ENCODE measurements at regions of chr14 and their contacts with region 1.

Region 1: DNA sequence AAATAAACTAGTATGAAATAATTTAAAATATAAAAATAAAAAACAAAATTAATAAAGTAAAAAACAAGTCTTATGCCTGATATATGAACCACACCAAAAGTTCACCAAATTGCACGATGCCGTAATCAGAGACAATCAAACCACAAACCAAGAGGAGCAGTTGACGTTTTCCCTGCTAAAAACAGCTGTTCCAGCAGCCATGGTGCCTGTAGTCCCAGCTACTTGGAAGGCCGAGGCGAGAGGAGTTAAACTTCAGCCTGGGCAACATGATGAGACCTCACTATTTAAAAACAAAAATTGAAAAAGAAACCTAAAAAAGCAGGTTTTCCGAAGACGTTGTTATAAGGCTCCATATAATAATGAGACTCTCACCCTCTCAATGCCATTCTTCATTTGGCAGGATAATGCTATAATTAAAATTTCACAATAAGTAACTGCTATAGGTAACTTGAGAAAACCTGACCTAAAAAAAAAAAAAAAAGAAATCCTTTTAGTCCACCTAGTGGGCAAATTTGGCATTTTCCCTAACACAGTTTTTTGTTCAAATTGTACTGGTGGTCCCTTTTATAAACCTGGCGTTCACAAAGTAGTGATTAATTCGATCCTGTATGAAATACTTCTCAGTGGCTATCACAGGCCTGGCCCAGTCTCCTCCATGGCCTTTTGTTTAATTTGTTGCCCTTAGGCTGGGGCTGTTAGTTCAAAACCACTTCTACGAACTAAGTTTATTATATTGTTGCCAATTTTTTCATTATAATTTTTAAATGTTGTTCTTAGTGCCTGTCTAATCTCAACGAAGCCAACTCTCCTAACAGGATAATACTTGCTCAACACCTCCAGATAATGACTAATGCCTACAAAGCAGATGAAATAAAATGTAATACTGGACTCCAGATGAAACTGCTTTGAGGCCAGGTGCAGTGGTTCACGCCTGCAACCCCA is 62.1 kb downstream of the TNFAIP2 start:
- DNase-seq: no peak
- H3K4me3 ChIP-seq: no peak overlapping the region
- H3K27ac ChIP-seq: no peak overlapping the region
- H3K4me1 ChIP-seq: no peaks in the 10 kb centered on the region
- H3K27me3 ChIP-seq: peaks cover 4% of the 10 kb centered on the region
- CTCF ChIP-seq: peak; percentile 66

Region 2: DNA sequence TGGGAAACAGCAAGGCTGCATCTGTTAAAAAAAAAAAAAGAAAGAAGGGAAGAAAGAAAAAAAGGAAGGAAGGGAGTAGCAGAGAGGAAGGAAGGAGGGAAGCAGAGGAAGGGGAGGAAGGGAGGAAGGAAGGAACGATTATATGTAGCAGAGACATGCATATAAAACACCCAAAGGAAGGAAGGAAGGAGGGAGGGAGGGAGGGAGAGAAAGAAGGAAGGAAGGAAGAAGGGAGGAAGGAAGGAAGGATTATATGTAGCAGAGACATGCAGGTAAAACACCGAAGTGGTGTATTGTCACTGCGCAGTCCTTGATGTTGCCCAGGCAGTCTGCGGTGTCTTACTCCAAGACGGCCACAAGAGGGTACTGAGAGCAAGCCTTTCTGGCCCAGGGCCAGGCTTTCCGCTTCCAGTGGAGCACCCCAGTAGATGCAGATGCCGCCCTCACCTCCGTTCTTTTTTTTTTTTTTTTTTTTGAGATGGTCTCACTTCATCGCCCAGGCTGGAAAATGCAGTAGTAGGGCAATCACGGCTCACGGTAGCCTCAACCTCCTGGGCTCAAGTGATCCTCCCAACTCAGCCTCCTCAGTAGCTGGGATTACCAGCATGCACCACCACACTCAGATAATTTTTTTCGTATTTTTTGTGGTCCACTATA is 107.1 kb before region 1 on chr14:
- intact Hi-C with region 1: loop called (anchors 10 kb)
- DNase-seq: peak; percentile 84
- H3K4me3 ChIP-seq: no peak overlapping the region
- H3K27ac ChIP-seq: no peak overlapping the region
- H3K4me1 ChIP-seq: peaks cover 8% of the 10 kb centered on the region
- H3K27me3 ChIP-seq: no peaks in the 10 kb centered on the region
- CTCF ChIP-seq: peak; percentile 71

Region 3: DNA sequence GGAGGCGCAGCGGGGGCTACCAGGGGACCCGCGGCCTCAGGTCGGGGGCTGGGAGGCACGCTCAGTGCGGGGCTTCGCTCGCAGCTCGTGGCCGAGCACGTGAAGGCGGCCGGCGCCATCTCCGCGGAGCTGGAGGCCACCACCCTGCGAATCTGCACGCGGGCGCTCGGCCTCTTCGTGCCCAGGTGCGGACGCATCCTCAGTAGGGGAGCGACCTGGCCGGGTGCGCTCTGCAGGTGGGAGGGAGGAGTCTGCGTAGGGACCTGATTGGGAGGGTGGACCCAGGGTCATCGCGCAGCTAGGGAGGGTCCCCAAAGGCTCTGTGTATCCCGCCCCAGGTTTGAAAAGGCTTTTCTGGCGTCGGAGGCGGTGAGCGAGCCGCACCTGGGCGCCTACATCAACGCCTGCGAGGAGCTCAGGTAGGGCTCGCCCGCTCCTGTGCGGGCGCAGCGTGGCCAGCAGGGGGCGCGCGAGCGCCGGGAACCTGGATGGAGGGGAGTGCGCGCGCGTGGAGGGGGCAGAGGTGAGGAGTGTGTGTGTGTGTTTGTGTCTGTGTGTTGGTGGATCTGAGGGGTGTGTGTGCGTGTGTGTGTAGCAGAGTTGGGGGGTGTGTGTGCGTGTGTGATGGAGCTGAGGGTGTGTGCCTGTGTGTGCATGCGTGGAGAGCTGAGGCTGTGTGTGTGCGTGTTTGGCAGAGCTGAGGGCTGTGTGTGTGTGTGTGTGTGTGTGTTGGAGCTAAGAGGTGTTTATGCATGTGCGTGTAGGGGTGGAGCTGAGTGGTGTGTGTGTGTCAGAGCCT is 80.5 kb before region 1 on chr14:
- intact Hi-C with region 1: loop called (anchors 10 kb)
- DNase-seq: peak; percentile 82
- H3K4me3 ChIP-seq: no peak overlapping the region
- H3K27ac ChIP-seq: no peak overlapping the region
- H3K4me1 ChIP-seq: peaks cover 15% of the 10 kb centered on the region
- H3K27me3 ChIP-seq: peaks cover 23% of the 10 kb centered on the region
- CTCF ChIP-seq: peak; percentile 92

Region 4: DNA sequence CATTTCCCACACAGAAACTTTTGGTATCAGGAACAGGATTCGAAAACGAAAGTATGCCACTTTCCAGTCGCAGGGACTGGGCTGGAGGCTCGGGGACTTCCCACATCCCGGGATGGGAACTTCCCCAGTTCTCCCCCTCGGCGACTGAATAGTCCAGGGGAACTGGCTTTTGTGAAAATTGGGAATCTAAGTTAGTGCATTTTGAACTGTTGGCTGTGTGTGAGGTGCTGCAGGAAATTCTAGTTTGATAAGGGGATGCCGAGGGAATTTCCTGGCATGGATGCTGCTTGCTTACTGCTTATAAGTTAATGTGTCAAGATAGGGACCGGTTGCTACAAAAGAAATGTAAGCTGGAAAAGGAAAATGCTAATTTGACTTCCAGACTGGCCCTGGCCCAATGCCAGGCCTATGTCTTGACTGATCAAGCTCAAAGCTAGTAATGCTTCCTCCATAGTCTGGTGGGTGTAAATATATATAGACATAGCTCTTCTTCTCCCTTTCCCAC is 75.3 kb after region 1 on chr14:
- intact Hi-C with region 1: no loop called
- DNase-seq: peak; percentile 69
- H3K4me3 ChIP-seq: peak overlapping the region; percentile 34
- H3K27ac ChIP-seq: peak overlapping the region; percentile 78
- H3K4me1 ChIP-seq: peaks cover 4% of the 10 kb centered on the region
- H3K27me3 ChIP-seq: no peaks in the 10 kb centered on the region
- CTCF ChIP-seq: no peak